SK-N-SH (cell line): ENCODE measurements at regions of chr11 and their contacts with region 1.

Region 1: DNA sequence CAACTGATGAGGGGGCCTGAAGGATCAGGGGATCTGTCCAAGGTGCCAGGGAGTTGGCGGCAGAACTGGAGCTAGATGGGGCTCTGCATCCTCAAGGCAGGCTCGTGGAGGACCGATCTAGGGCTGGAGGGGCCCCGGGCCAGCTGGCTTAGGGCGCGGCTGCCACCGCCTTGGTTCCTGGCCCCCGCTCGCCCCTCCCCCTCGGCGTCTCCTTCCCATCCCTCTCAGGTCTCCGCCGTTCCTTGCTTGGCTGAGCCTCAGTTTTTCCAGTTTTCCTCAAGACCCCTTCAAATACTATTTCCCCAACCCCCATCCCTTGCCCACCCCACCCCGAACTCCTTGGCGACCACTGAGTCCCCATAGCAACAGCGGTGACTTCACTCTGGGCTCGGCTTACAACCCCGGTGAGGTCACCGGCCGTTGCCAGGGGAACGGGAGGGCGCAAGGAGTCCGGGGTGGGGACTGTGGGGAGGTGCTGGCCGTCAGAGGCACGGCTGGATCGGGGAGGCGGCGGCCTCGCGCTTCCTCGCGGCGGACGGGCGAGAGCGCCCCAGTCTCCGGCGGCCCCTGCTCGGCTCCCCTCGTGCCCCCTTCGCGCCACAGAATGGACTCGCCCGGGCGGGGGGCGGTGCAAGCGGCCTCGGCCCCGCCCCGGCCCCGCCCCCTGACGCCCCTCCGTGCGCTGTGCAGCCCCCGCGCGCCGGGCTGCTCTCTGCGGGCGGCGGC is 7.5 kb downstream of the FREY1 start:
- DNase-seq: peak; percentile 97
- H3K4me3 ChIP-seq: peak overlapping the region; percentile 52 to 93
- H3K27ac ChIP-seq: peak overlapping the region; percentile 76 to 89
- H3K4me1 ChIP-seq: peaks cover 11 to 45% of the 10 kb centered on the region in 2 experiments; a peak in 2 of 4 replicates
- H3K27me3 ChIP-seq: no peaks in the 10 kb centered on the region
- CTCF ChIP-seq: no peak
- EP300 ChIP-seq: peak in 1 of 2 experiments; percentile 45; a peak in 1 of 4 replicates
- RAD21 ChIP-seq: no peak

Region 2: GRCh38 chr11:45879803-45880686 is 19.6 kb before region 1 on chr11:
- CTCF ChIA-PET with region 1: interaction called, 31 read pairs
- POLR2A ChIA-PET with region 1: interaction called, 5 read pairs
- DNase-seq: no peak
- H3K4me3 ChIP-seq: no peak overlapping the region
- H3K27ac ChIP-seq: peak overlapping the region; percentile 74 to 97
- H3K4me1 ChIP-seq: peaks cover 24 to 47% of the 10 kb centered on the region in 2 experiments
- H3K27me3 ChIP-seq: no peaks in the 10 kb centered on the region
- CTCF ChIP-seq: no peak
- EP300 ChIP-seq: peak; percentile 43 to 47; a peak in 3 of 4 replicates
- RAD21 ChIP-seq: 0 out of 2 replicates have a peak, but pooled peaks have one; percentile 4